MCF 10A (cell line): ENCODE measurements at regions of chr9 and their contacts with region 1.

Region 1: GRCh38 chr9:17462869-17463464 is 115.9 kb upstream of the SH3GL2 start:
- DNase-seq: peak; percentile 63
- H3K4me3 Mint-ChIP-seq: no peak overlapping the region
- H3K27ac Mint-ChIP-seq: no peak overlapping the region
- H3K4me1 Mint-ChIP-seq: no peaks in the 10 kb centered on the region
- H3K27me3 Mint-ChIP-seq: no peaks in the 10 kb centered on the region
- CTCF ChIP-seq: peak; percentile 55

Region 2: GRCh38 chr9:17063535-17064135 is 399.3 kb before region 1 on chr9:
- CTCF ChIA-PET with region 1: interaction called, 28 read pairs
- POLR2A ChIA-PET with region 1: no interaction called
- intact Hi-C with region 1: loop called (anchors 1 kb)
- DNase-seq: peak; percentile 72
- H3K4me3 Mint-ChIP-seq: no peak overlapping the region
- H3K27ac Mint-ChIP-seq: no peak overlapping the region
- H3K4me1 Mint-ChIP-seq: no peaks in the 10 kb centered on the region
- H3K27me3 Mint-ChIP-seq: peaks cover 8% of the 10 kb centered on the region
- CTCF ChIP-seq: peak; percentile 74

Region 3: DNA sequence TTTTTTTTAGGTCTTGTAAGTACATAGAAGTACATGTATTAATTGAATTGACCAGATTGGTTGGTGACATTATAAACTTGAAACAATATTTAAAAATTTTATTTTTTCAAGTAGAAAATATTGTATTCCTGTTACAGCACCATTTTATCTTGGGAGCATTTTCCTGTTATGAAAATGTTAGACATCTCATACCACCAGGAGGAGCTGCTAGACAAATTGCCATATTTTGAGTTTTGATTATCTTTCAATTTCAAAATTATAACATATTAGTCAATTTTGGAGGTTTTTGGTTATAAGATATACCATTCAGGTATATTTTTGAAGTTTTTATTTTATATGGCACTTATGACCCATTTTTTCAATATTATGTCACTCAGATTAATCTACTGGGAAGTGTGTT is 243.7 kb before region 1 on chr9:
- CTCF ChIA-PET with region 1: interaction called, 9 read pairs
- POLR2A ChIA-PET with region 1: no interaction called
- intact Hi-C with region 1: loop called (anchors 1 kb)
- DNase-seq: peak; percentile 18
- H3K4me3 Mint-ChIP-seq: no peak overlapping the region
- H3K27ac Mint-ChIP-seq: no peak overlapping the region
- H3K4me1 Mint-ChIP-seq: peaks cover 8% of the 10 kb centered on the region
- H3K27me3 Mint-ChIP-seq: no peaks in the 10 kb centered on the region
- CTCF ChIP-seq: peak; percentile 20

Region 4: DNA sequence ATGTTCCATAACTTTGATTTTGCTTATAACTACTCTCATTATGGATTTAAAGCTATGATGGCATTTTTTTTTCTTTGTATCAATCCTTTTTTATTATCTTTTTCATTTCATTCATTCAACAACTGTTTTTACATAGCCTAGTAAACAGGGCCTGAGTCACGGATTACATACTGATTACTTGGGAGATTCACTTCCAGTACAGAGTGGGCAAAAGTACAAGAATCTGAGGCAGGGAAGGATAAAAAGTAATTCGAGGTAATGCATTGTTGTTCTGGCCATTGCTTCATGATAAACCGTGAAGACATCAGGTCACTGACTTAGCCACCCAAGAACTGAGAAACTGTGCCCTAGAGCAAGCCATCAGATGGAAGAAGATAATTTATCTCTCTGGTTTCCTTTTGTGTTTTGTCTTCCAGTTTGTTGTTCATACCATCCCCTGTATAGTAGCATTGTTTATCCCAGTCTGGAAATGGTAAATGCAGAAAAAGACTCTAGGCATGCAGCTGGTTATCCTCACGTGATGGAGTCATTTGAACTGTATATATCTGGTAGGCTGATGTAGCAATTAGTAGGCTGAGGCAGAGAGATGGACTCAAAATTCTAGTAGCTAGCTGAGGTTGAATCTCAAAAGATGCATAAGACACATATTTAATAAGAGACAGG is 182.5 kb before region 1 on chr9:
- CTCF ChIA-PET with region 1: no interaction called
- POLR2A ChIA-PET with region 1: no interaction called
- intact Hi-C with region 1: no loop called
- DNase-seq: no peak
- H3K4me3 Mint-ChIP-seq: no peak overlapping the region
- H3K27ac Mint-ChIP-seq: no peak overlapping the region
- H3K4me1 Mint-ChIP-seq: no peaks in the 10 kb centered on the region
- H3K27me3 Mint-ChIP-seq: no peaks in the 10 kb centered on the region
- CTCF ChIP-seq: no peak

Region 5: DNA sequence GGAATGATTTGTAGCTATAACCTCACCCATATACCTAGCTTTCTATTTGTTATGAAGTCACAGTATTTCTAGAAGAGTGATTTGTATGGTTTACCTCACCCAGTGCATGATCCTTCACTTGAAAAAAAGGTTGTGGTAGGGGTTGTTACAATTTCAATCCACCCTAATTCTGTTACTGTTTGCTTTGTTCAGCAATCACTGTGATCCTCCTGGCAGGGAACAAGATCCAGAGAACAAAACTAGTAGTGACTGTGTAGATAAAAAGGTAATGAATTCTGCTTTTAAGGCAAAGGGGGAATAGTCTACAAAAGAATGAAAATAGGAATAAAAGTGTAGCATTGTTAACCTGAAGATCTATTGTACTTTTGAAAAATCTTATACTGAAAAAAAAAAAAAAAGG is 75.4 kb before region 1 on chr9:
- CTCF ChIA-PET with region 1: no interaction called
- POLR2A ChIA-PET with region 1: no interaction called
- intact Hi-C with region 1: no loop called
- DNase-seq: no peak
- H3K4me3 Mint-ChIP-seq: no peak overlapping the region
- H3K27ac Mint-ChIP-seq: no peak overlapping the region
- H3K4me1 Mint-ChIP-seq: no peaks in the 10 kb centered on the region
- H3K27me3 Mint-ChIP-seq: no peaks in the 10 kb centered on the region
- CTCF ChIP-seq: no peak

Region 6: DNA sequence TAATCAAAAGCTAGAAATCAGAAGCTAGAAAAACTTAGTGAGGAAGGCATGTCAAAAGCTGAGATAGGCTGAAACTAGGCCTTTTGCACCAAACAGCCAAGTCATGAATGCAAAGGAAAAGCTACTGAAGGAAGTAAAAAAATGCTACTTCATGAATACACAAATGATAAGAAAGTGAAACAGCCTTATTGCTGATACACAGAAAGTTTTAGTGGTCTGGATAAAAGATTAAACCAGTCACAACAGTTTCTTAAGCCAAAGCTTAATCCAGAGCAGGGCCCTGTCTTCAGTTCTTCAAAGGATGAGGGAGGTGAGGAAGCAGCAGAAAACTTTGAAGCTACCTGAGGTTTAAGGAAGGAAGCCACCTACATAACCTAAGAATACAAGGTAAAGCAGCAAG is 13.4 kb after region 1 on chr9:
- CTCF ChIA-PET with region 1: interaction called, 11 read pairs
- POLR2A ChIA-PET with region 1: no interaction called
- intact Hi-C with region 1: no loop called
- DNase-seq: no peak
- H3K4me3 Mint-ChIP-seq: no peak overlapping the region
- H3K27ac Mint-ChIP-seq: no peak overlapping the region
- H3K4me1 Mint-ChIP-seq: no peaks in the 10 kb centered on the region
- H3K27me3 Mint-ChIP-seq: no peaks in the 10 kb centered on the region
- CTCF ChIP-seq: no peak

Region 7: GRCh38 chr9:17509701-17510100 is 46.7 kb after region 1 on chr9:
- CTCF ChIA-PET with region 1: no interaction called
- POLR2A ChIA-PET with region 1: no interaction called
- intact Hi-C with region 1: no loop called
- DNase-seq: no peak
- H3K4me3 Mint-ChIP-seq: no peak overlapping the region
- H3K27ac Mint-ChIP-seq: no peak overlapping the region
- H3K4me1 Mint-ChIP-seq: no peaks in the 10 kb centered on the region
- H3K27me3 Mint-ChIP-seq: no peaks in the 10 kb centered on the region
- CTCF ChIP-seq: no peak